ENCODE measurements at regions of chr6 and their contacts with region 1.

Region 1: GRCh38 chr6:7270320-7271204 is 42.4 kb downstream of the SSR1 start:
- DNase-seq: no peak
- H3K4me3 ChIP-seq: no peak overlapping the region
- H3K4me1 ChIP-seq: no peaks in the 10 kb centered on the region
- H3K27me3 ChIP-seq: no peaks in the 10 kb centered on the region

Region 2: GRCh38 chr6:7615611-7616383 is 345.2 kb after region 1 on chr6:
- in situ Hi-C with region 1: loop called (anchors 10 kb)
- DNase-seq: peak; percentile 57 to 67
- H3K4me3 ChIP-seq: no peak overlapping the region
- H3K4me1 ChIP-seq: no peaks in the 10 kb centered on the region; the same call in 1 of the 2 replicates
- H3K27me3 ChIP-seq: no peaks in the 10 kb centered on the region

Measured in HAP-1 (cell line).